ENCODE measurements at regions of chr2 and their contacts with region 1.

Region 1: DNA sequence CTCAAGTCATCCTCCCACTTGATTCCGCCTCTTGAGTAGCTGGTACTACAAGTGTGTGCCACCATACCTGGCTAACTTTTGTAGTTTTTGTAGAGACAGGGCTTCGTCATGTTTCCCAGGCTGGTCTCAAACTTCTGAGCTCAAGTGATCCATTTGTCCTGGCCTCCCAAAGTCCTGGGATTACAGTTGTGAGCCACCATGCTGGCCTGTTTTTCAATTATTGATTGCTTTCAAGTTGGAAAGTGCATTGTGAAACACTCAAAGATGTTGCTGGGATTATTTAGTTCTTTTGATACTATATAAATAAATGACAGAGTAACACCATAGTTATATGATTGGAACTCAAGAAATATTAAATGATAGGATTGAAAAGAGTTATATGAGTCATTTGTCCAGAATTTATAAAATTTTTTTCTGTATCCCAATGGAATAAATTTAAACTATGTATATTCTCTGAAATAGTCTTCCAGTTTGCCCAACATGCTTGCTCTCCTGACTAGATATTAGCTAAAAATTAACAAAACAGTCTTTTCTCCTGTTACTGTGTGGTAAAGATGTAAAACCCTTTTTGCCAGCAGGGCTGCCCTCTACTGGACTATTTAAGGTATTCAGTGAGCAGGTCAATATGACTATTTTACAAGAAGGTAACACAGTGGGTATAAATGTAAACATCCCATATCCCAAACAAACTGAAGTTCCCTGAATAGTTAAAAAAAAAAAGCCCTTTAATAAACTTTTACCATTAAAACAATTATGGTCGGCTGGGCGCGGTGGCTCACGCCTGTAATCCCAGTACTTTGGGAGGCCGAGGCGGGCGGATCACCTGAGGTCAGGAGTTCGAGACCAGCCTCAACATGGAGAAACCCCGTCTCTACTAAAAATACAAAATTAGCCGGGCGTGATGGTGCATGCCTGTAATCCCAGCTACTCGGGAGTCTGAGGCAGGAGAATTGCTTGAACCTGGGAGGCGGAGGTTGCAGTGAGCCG is 42.7 kb downstream of the ACSL3 start:
- DNase-seq: peak in 1 of 3 donors; percentile 58
- ATAC-seq: peak; percentile 85 to 95 (median 94)
- H3K4me3 ChIP-seq: no peak overlapping the region
- H3K27ac ChIP-seq: peak overlapping the region in 1 of 3 donors; percentile 14
- H3K4me1 ChIP-seq: peaks cover 0 to 26% (median 12%) of the 10 kb centered on the region in 4 donors
- H3K27me3 ChIP-seq: no peaks in the 10 kb centered on the region
- CTCF ChIP-seq: peak; percentile 60 to 86 (median 76)
- POLR2A ChIP-seq: no peak

Region 2: GRCh38 chr2:222613715-222614331 is 289.7 kb before region 1 on chr2:
- intact Hi-C with region 1: no loop called
- DNase-seq: no peak
- ATAC-seq: peak; percentile 72 to 80 (median 77)
- H3K4me3 ChIP-seq: no peak overlapping the region
- H3K27ac ChIP-seq: no peak overlapping the region
- H3K4me1 ChIP-seq: no peaks in the 10 kb centered on the region
- H3K27me3 ChIP-seq: no peaks in the 10 kb centered on the region
- CTCF ChIP-seq: peak; percentile 56 to 72 (median 60)
- POLR2A ChIP-seq: no peak

Region 3: DNA sequence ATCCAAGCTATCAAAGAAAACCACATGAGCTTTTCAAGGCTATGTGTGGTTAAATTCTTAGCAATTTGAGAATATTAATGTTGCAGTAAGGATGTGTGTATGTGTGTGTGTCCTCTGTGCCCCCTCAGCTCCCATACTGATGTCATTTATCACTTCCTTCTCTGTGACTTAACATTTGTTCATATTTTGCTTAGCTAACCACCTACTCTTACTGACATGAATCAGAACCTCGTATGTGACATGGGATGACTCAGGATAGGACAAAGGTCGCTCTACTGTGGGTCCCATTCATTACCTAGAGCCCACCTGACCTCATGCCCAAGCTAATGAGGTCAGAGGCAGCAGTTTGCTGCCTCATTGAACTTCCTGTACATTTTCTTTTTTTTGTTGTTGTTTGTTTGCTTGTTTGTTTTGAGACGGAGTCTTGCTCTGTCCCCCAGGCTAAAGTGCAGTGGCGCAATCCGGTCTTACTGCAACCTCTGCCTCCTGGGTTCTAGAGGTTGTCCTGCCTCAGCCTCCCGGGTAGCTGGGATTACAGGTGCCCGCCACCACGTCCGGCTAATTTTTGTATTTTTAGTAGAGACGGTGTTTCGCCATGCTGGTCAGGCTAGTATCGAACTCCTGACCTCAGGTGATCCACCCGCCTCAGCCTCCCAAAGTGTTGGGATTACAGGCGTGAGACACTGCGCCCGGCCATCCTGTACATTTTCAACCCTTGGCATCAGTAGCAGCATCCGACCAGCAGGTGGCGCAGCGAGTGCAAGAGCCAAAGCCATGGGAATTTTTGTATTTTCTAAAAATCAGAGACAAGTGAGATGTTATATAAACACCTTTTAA is 195.6 kb before region 1 on chr2:
- intact Hi-C with region 1: loop called in 1 of 2 experiments (anchors 10 kb)
- DNase-seq: peak; percentile 77 to 80 (median 79)
- ATAC-seq: peak; percentile 77 to 86 (median 84)
- H3K4me3 ChIP-seq: no peak overlapping the region
- H3K27ac ChIP-seq: peak overlapping the region in 1 of 3 donors; percentile 7
- H3K4me1 ChIP-seq: no peaks in the 10 kb centered on the region
- H3K27me3 ChIP-seq: no peaks in the 10 kb centered on the region
- CTCF ChIP-seq: peak; percentile 89 to 94 (median 92)
- POLR2A ChIP-seq: no peak

Region 4: GRCh38 chr2:223084873-223085272 is 181.3 kb after region 1 on chr2:
- intact Hi-C with region 1: no loop called
- DNase-seq: no peak
- ATAC-seq: no peak
- H3K4me3 ChIP-seq: no peak overlapping the region
- H3K27ac ChIP-seq: no peak overlapping the region
- H3K4me1 ChIP-seq: no peaks in the 10 kb centered on the region
- H3K27me3 ChIP-seq: no peaks in the 10 kb centered on the region
- CTCF ChIP-seq: no peak
- POLR2A ChIP-seq: no peak

Region 5: DNA sequence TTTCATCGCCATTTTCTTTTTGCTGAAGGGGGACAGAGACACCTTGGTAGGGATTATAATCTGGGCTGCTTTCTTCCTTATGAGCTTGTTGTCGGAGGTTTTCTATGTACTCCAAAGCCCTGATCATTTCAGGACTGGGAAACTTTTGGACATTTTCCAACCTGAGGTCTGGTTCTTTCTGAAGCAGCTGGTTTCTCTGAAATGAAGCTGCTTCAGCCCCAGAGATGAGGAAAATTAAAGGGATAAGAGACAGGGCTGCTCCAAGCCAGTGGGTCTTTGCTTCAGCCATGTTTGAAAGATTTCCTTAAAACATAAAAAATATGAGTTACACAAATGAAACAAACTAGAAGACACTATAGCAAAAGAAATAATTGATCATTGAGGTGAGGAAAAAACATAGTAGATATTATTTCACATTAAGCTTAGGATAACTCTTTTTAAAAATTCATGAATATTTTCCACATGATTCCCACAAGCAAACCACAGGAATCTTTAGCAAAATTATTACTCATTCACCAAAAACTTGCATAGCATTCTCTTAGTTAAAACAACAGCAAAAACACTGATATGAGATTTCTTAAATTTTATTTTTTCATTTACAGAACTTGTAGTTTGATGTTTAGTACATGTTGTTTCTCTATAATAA is 695.6 kb after region 1 on chr2:
- intact Hi-C with region 1: no loop called
- DNase-seq: no peak
- ATAC-seq: no peak
- H3K4me3 ChIP-seq: no peak overlapping the region
- H3K27ac ChIP-seq: no peak overlapping the region
- H3K4me1 ChIP-seq: no peaks in the 10 kb centered on the region
- H3K27me3 ChIP-seq: no peaks in the 10 kb centered on the region
- CTCF ChIP-seq: no peak
- POLR2A ChIP-seq: no peak

Measured in right lobe of liver (tissue), 6 donors.